ENCODE measurements at regions of chr18 and their contacts with region 1.

Region 1: GRCh38 chr18:21526463-21526862 is 74.0 kb downstream of the ESCO1 start:
- DNase-seq: no peak
- ATAC-seq: no peak
- H3K4me3 ChIP-seq: no peak overlapping the region
- H3K4me3 Mint-ChIP-seq: no peak overlapping the region
- H3K27ac ChIP-seq: no peak overlapping the region
- H3K27ac Mint-ChIP-seq: no peak overlapping the region
- H3K4me1 ChIP-seq: no peaks in the 10 kb centered on the region
- H3K4me1 Mint-ChIP-seq: no peaks in the 10 kb centered on the region
- H3K27me3 ChIP-seq: no peaks in the 10 kb centered on the region
- H3K27me3 Mint-ChIP-seq: no peaks in the 10 kb centered on the region
- CTCF ChIP-seq: no peak

Region 2: DNA sequence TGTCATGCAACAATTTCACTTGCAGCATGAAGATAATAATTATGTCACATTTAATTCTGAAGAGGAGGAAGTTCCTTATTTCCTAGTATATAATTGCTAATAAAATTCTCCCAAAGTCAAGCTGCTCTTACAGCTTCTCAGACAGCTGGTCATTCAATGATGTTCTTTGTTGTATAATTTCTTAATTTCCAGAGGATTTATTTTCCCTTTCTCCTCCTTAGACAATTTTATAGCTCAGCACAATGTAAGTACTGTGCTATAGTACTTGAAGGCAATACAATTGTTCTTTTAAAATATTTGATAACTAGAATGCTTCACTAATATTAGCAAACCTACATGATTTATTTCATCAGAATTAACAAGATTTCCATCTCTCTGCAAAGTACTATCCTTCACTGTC is 488.3 kb before region 1 on chr18:
- CTCF ChIA-PET with region 1: no interaction called
- POLR2A ChIA-PET with region 1: no interaction called
- intact Hi-C with region 1: no loop called
- DNase-seq: no peak
- ATAC-seq: no peak
- H3K4me3 ChIP-seq: no peak overlapping the region
- H3K4me3 Mint-ChIP-seq: no peak overlapping the region
- H3K27ac ChIP-seq: no peak overlapping the region
- H3K27ac Mint-ChIP-seq: peak overlapping the region; percentile 14
- H3K4me1 ChIP-seq: no peaks in the 10 kb centered on the region
- H3K4me1 Mint-ChIP-seq: peaks cover 13% of the 10 kb centered on the region
- H3K27me3 ChIP-seq: no peaks in the 10 kb centered on the region
- H3K27me3 Mint-ChIP-seq: no peaks in the 10 kb centered on the region
- CTCF ChIP-seq: no peak

Region 3: DNA sequence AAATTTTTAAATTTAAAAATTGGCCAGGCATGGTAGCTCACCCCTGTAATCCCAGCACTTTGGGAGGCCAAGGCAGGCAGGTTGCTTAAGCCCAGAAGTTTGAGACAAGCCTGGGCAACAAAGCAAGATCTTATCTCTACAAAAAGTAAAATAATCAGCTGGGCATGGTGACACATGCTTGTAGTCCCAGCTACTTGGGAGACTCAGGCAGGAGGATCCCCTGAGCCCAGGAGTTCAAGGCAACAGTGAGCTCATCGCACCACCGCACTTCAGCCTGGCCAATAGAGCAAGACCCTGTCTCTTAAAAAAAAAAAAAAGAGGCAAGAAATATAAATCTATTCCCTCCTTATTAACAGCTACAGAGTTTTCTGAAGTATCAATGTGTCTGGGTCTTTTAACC is 22.2 kb after region 1 on chr18:
- CTCF ChIA-PET with region 1: no interaction called
- POLR2A ChIA-PET with region 1: no interaction called
- intact Hi-C with region 1: loop called in 1 of 2 experiments (anchors 2 kb)
- DNase-seq: no peak
- ATAC-seq: no peak
- H3K4me3 ChIP-seq: no peak overlapping the region
- H3K4me3 Mint-ChIP-seq: no peak overlapping the region
- H3K27ac ChIP-seq: no peak overlapping the region
- H3K27ac Mint-ChIP-seq: no peak overlapping the region
- H3K4me1 ChIP-seq: no peaks in the 10 kb centered on the region
- H3K4me1 Mint-ChIP-seq: peaks cover 4% of the 10 kb centered on the region
- H3K27me3 ChIP-seq: no peaks in the 10 kb centered on the region
- H3K27me3 Mint-ChIP-seq: no peaks in the 10 kb centered on the region
- CTCF ChIP-seq: no peak

Region 4: DNA sequence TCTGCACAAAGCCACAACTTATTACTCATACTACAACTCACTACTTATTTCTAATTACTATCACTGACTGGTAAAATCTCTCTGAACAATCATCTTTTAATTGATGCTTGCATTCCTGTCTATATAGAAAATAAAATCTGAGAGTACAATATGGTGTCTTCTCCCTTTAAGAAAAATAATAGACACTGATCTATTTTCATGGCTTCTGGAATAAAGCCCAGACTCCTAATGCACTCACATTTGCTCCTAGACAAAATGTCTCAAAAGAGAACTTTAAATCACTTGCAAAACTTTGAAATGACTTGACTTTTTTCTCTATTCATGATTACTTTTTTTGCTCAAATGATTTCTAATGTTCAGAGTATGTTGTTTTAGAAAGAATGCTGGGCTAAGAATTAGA is 45.3 kb after region 1 on chr18:
- CTCF ChIA-PET with region 1: no interaction called
- POLR2A ChIA-PET with region 1: no interaction called
- intact Hi-C with region 1: loop called in 1 of 2 experiments (anchors 5 kb)
- DNase-seq: no peak
- ATAC-seq: no peak
- H3K4me3 ChIP-seq: no peak overlapping the region
- H3K4me3 Mint-ChIP-seq: no peak overlapping the region
- H3K27ac ChIP-seq: no peak overlapping the region
- H3K27ac Mint-ChIP-seq: no peak overlapping the region
- H3K4me1 ChIP-seq: no peaks in the 10 kb centered on the region
- H3K4me1 Mint-ChIP-seq: peaks cover 9% of the 10 kb centered on the region
- H3K27me3 ChIP-seq: no peaks in the 10 kb centered on the region
- H3K27me3 Mint-ChIP-seq: no peaks in the 10 kb centered on the region
- CTCF ChIP-seq: no peak

Region 5: GRCh38 chr18:21636769-21637168 is 110.3 kb after region 1 on chr18:
- CTCF ChIA-PET with region 1: no interaction called
- POLR2A ChIA-PET with region 1: no interaction called
- intact Hi-C with region 1: no loop called
- DNase-seq: no peak
- ATAC-seq: no peak
- H3K4me3 ChIP-seq: no peak overlapping the region
- H3K4me3 Mint-ChIP-seq: no peak overlapping the region
- H3K27ac ChIP-seq: no peak overlapping the region
- H3K27ac Mint-ChIP-seq: no peak overlapping the region
- H3K4me1 ChIP-seq: no peaks in the 10 kb centered on the region
- H3K4me1 Mint-ChIP-seq: no peaks in the 10 kb centered on the region
- H3K27me3 ChIP-seq: no peaks in the 10 kb centered on the region
- H3K27me3 Mint-ChIP-seq: no peaks in the 10 kb centered on the region
- CTCF ChIP-seq: no peak

Measured in CD8-positive, alpha-beta T cell (primary cell).